ENCODE measurements at regions of chr7 and their contacts with region 1.

Region 1: DNA sequence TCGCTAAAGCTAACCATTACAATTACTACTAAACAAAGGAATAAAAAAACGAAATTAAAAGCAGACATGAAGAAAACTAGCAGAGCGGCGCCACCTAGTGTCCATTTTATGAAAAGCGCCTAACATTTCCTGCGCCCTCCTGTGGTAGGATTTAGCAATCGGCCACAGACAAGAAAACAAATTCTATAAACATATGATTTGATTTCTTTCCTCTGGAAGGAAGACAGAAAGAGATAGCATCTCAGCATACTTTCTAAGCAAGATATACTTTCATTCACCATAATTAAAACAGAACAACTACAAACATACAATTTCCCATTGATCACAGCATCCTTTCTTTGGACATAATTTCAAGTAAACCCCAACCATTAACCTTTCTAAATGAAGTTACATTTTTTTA is 337.7 kb upstream of the NPVF start:
- DNase-seq: peak; percentile 44 to 79 (median 62)
- ATAC-seq: peak; percentile 68
- H3K4me3 ChIP-seq: no peak overlapping the region
- H3K4me3 Mint-ChIP-seq: no peak overlapping the region
- H3K27ac ChIP-seq: no peak overlapping the region
- H3K27ac Mint-ChIP-seq: no peak overlapping the region
- H3K4me1 ChIP-seq: no peaks in the 10 kb centered on the region
- H3K4me1 Mint-ChIP-seq: peaks cover 4% of the 10 kb centered on the region
- H3K27me3 ChIP-seq: no peaks in the 10 kb centered on the region
- H3K27me3 Mint-ChIP-seq: no peaks in the 10 kb centered on the region
- CTCF ChIP-seq: peak; percentile 100

Region 2: DNA sequence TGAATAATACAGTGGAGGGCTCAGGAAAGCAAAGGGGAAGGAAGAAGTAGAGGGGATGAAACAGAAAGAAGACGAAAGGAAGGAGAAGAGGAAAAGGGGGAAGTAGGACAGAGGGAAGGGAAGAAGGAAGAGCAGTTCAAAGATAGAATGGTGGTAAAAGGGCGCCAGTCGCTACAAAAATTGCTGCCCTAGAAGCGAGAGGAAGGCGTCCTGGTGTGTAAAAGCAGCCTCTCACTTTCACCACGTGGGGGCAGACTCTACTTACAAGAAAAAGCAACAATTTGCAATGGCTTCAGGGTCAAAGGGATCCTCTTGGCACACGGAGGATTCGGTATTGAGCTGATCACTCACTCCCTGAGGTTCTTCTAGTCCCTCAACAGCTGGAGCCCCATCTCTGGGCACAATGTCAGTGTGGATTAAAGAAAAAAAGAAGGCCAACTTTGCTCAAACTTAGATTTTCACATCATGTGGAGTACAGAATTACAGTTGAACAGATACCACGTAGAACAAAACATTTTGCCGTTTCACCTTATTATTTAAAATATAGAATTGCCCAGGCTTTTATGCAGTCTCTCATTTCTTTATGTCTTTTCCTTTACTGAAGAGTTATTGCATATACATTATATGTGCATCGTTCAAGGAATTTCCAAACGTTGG is 306.2 kb before region 1 on chr7:
- CTCF ChIA-PET with region 1: interaction called, 216 read pairs
- POLR2A ChIA-PET with region 1: interaction called, 4 read pairs
- intact Hi-C with region 1: loop called (anchors 1 kb)
- DNase-seq: peak; percentile 24 to 83 (median 65)
- ATAC-seq: peak; percentile 83
- H3K4me3 ChIP-seq: no peak overlapping the region
- H3K4me3 Mint-ChIP-seq: peak overlapping the region; percentile 61
- H3K27ac ChIP-seq: no peak overlapping the region
- H3K27ac Mint-ChIP-seq: no peak overlapping the region
- H3K4me1 ChIP-seq: peaks cover 20% of the 10 kb centered on the region
- H3K4me1 Mint-ChIP-seq: peaks cover 25% of the 10 kb centered on the region
- H3K27me3 ChIP-seq: no peaks in the 10 kb centered on the region
- H3K27me3 Mint-ChIP-seq: peaks cover 3% of the 10 kb centered on the region
- CTCF ChIP-seq: peak; percentile 81

Region 3: DNA sequence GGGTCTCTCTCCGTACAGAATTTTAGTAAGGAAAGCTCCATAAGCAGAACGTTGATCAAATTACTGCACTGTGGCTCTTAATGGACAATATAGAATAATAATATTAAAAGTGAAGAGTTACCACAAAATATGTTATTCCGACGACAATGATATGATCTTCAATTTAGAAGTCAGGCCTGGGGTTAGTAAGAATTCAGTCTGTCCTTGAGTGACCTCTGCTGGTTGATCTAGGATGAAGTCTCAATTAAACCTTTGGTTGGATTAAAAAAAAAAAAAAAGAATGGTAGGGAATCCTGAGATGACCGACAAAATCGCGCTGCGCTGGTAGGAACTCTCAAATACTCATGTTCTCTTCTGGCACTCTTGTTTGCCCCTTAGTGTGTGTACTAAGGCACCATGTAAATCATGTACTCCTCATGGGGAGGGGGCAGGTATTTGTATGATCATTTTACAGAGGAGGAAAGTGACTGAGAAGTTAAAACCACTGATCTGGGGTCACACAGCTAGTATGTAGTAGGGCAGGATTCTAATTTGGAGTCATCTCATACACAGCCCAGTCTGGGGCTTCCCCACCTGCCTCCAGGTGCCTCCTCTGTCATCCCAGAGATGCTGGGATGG is 176.4 kb before region 1 on chr7:
- CTCF ChIA-PET with region 1: interaction called, 67 read pairs
- POLR2A ChIA-PET with region 1: no interaction called
- intact Hi-C with region 1: loop called (anchors 1 kb)
- DNase-seq: peak in 2 of 9 experiments; percentile 34 to 57
- ATAC-seq: no peak
- H3K4me3 ChIP-seq: no peak overlapping the region
- H3K4me3 Mint-ChIP-seq: no peak overlapping the region
- H3K27ac ChIP-seq: no peak overlapping the region
- H3K27ac Mint-ChIP-seq: no peak overlapping the region
- H3K4me1 ChIP-seq: no peaks in the 10 kb centered on the region
- H3K4me1 Mint-ChIP-seq: no peaks in the 10 kb centered on the region
- H3K27me3 ChIP-seq: no peaks in the 10 kb centered on the region
- H3K27me3 Mint-ChIP-seq: peaks cover 4% of the 10 kb centered on the region
- CTCF ChIP-seq: no peak

Region 4: GRCh38 chr7:25395976-25396375 is 170.0 kb before region 1 on chr7:
- CTCF ChIA-PET with region 1: interaction called, 67 read pairs
- POLR2A ChIA-PET with region 1: no interaction called
- intact Hi-C with region 1: loop called (anchors 1 kb)
- DNase-seq: no peak
- ATAC-seq: no peak
- H3K4me3 ChIP-seq: no peak overlapping the region
- H3K4me3 Mint-ChIP-seq: no peak overlapping the region
- H3K27ac ChIP-seq: no peak overlapping the region
- H3K27ac Mint-ChIP-seq: no peak overlapping the region
- H3K4me1 ChIP-seq: no peaks in the 10 kb centered on the region
- H3K4me1 Mint-ChIP-seq: no peaks in the 10 kb centered on the region
- H3K27me3 ChIP-seq: no peaks in the 10 kb centered on the region
- H3K27me3 Mint-ChIP-seq: peaks cover under 1% of the 10 kb centered on the region
- CTCF ChIP-seq: no peak

Region 5: DNA sequence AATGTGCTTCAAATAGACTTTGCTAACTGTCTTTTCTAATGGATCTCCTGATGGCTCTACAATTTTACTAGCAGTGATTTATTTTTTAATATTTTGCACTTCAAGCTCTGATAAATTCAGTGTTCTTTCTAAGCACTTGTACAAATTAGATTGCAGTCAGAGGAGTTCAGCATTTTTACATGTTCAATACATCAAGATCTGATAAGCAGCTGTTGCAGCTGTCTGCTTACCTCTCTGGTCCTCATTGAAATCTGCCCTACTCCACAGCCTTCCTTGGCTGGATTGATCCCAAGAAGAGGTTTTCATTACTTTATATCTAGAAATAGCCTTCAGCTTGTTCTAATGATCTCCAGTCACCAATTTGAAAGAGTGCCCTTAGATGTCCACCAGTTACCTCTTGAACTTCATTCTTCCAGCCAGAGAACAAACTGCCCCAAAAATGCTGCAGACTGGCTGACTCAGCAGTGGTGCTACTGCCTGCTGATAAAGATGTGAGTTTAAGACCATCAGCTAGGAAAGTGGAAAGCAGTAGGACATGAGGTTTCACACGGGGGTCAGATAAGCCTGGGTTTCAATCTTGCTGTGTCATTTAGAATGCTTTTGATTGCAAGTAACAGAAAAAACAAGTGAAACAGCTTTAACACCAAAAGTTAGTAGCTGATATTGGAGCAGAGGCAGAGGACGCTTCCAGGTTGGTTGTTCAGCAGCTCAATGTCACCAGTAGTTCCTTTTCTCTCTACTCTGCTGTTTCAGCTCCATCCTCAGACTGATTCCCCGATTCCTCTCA is 13.2 kb after region 1 on chr7:
- CTCF ChIA-PET with region 1: interaction called, 19 read pairs
- POLR2A ChIA-PET with region 1: no interaction called
- intact Hi-C with region 1: no loop called
- DNase-seq: no peak
- ATAC-seq: no peak
- H3K4me3 ChIP-seq: no peak overlapping the region
- H3K4me3 Mint-ChIP-seq: no peak overlapping the region
- H3K27ac ChIP-seq: no peak overlapping the region
- H3K27ac Mint-ChIP-seq: no peak overlapping the region
- H3K4me1 ChIP-seq: no peaks in the 10 kb centered on the region
- H3K4me1 Mint-ChIP-seq: no peaks in the 10 kb centered on the region
- H3K27me3 ChIP-seq: no peaks in the 10 kb centered on the region
- H3K27me3 Mint-ChIP-seq: peaks cover 4% of the 10 kb centered on the region
- CTCF ChIP-seq: no peak

Region 6: DNA sequence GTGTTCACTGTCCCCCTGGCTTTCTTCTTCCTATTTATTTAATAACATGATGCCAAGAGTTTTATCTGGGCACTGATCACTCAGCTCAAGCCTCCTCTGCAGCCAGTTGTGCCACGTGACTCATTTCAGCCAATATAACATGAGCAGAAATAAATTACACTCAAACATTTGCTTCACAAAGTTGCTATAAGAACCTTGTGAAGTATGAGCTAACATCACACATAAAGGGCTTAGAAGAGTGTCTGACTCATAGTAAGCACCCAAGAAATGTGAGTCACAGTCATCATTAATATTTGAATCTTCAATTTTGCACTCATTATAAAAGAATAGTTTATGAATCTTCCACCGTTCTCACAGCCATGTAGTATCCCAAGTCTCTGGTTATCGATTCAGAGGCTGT is 76.9 kb after region 1 on chr7:
- CTCF ChIA-PET with region 1: no interaction called
- POLR2A ChIA-PET with region 1: no interaction called
- intact Hi-C with region 1: no loop called
- DNase-seq: no peak
- ATAC-seq: no peak
- H3K4me3 ChIP-seq: no peak overlapping the region
- H3K4me3 Mint-ChIP-seq: no peak overlapping the region
- H3K27ac ChIP-seq: no peak overlapping the region
- H3K27ac Mint-ChIP-seq: no peak overlapping the region
- H3K4me1 ChIP-seq: no peaks in the 10 kb centered on the region
- H3K4me1 Mint-ChIP-seq: no peaks in the 10 kb centered on the region
- H3K27me3 ChIP-seq: no peaks in the 10 kb centered on the region
- H3K27me3 Mint-ChIP-seq: no peaks in the 10 kb centered on the region
- CTCF ChIP-seq: no peak

Region 7: GRCh38 chr7:27199849-27200760 is 1634.2 kb after region 1 on chr7 and contains the start of gene HOXA13:
- CTCF ChIA-PET with region 1: no interaction called
- POLR2A ChIA-PET with region 1: no interaction called
- intact Hi-C with region 1: no loop called
- DNase-seq: peak in 4 of 9 experiments; percentile 44 to 61 (median 52)
- ATAC-seq: peak; percentile 69
- H3K4me3 ChIP-seq: peak within 1 kb of the TSS; percentile 6 to 39
- H3K4me3 Mint-ChIP-seq: peak within 1 kb of the TSS; percentile 81
- H3K27ac ChIP-seq: no peak within 1 kb of the TSS
- H3K27ac Mint-ChIP-seq: no peak within 1 kb of the TSS
- H3K4me1 ChIP-seq: peaks cover 39% of the 10 kb centered on the region
- H3K4me1 Mint-ChIP-seq: peaks cover 38% of the 10 kb centered on the region
- H3K27me3 ChIP-seq: peaks cover 69% of the 10 kb centered on the region in 2 experiments
- H3K27me3 Mint-ChIP-seq: peaks cover 81% of the 10 kb centered on the region
- CTCF ChIP-seq: no peak
- total RNA-seq, gene HOXA13: not detected